GM12878 (cell line): ENCODE measurements at regions of chr19 and their contacts with region 1.

Region 1: DNA sequence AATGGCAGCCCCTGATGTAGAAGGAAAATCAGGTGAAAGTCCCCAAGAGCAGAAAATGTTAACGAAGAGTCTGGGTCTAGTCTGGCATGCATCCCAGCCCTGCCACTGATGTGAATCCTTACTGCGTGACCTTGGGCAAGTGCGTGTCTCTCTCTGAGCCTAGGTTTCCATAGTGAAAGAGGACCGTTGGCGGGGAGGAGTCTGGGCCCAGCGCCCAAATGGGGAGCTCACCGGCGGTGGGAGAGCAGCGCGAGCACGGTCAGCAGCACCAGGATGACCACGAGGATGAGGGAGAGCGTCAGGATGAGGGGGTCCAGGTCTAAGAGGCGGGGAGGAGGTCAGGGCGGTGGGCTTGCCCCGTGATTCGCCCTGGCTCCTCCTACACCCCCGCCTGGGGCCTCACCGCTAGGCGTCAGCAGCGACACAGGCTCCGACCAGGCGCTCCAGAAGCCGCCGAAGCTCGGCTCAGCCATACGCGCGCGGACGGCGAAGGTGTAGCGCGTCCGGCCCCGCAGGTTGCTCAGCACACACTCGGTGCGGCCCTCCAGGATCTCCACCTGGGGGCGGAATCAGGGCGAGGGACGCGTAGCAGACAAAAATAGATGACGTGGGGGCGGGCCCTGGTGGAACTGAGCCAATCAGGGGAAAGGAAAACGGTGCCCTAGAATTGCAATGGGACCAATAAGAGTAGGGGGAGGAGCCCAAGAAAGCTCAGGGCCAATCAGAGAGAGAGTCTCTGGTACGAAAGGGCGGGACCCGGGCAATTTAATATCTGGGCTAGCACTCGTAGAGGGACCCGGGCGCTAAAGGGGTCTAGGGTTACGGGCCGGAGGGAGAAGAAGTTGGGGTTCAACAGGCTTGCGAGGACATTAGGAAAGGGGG is 3.2 kb downstream of the EPOR start:
- DNase-seq: peak; percentile 95
- ATAC-seq: peak; percentile 89
- H3K4me3 ChIP-seq: peak overlapping the region; percentile 79
- H3K27ac ChIP-seq: peak overlapping the region; percentile 88
- H3K4me1 ChIP-seq: peaks cover 27% of the 10 kb centered on the region
- H3K27me3 ChIP-seq: peaks cover 0 to 5% of the 10 kb centered on the region in 2 experiments; a peak in 2 of 4 replicates
- CTCF ChIP-seq: peak; percentile 75 to 79 (median 76)
- EP300 ChIP-seq: no peak
- POLR2A ChIP-seq: peak; percentile 89
- RAD21 ChIP-seq: peak; percentile 58

Region 2: GRCh38 chr19:11324079-11324661 is 56.7 kb before region 1 on chr19:
- CTCF ChIA-PET with region 1: interaction called, 10 read pairs
- POLR2A ChIA-PET with region 1: interaction called, 6 read pairs
- RAD21 ChIA-PET with region 1: interaction called, 7 read pairs
- SMC1A ChIA-PET with region 1: interaction called, 13 read pairs
- in situ Hi-C with region 1: no loop called
- intact Hi-C with region 1: no loop called
- DNase-seq: peak; percentile 71
- ATAC-seq: peak; percentile 92
- H3K4me3 ChIP-seq: peak overlapping the region; percentile 27
- H3K27ac ChIP-seq: peak overlapping the region; percentile 88
- H3K4me1 ChIP-seq: peaks cover 41% of the 10 kb centered on the region
- H3K27me3 ChIP-seq: no peaks in the 10 kb centered on the region
- CTCF ChIP-seq: no peak
- EP300 ChIP-seq: peak in 1 of 2 experiments; percentile 19; a peak in 1 of 4 replicates
- POLR2A ChIP-seq: peak; percentile 56; the same call in 1 of the 2 replicates
- RAD21 ChIP-seq: no peak; the same call in 1 of the 2 replicates

Region 3: DNA sequence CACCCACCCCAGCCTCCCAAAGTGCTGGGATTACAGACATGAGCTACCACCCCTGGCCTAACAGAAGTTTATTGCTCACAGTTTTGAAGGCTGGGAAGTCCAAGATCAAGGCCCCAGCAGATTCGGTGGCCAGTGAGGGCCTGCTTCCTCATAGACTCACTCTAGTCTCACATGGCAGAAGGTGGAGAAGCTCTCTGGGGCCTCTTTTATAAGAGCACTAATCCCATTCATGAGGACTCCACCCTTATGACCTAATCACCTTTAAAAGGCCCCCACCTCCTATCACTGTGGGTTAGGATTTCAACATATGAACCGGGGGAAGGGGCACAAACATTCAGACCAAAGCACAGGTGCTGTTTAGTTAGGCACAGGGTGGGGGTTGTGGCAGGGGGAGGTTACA is 13.4 kb before region 1 on chr19:
- CTCF ChIA-PET with region 1: interaction called, 29 read pairs
- POLR2A ChIA-PET with region 1: interaction called, 5 read pairs
- RAD21 ChIA-PET with region 1: interaction called, 3 read pairs
- SMC1A ChIA-PET with region 1: interaction called, 3 read pairs
- in situ Hi-C with region 1: no loop called
- intact Hi-C with region 1: no loop called
- DNase-seq: no peak
- ATAC-seq: no peak
- H3K4me3 ChIP-seq: no peak overlapping the region
- H3K27ac ChIP-seq: no peak overlapping the region
- H3K4me1 ChIP-seq: no peaks in the 10 kb centered on the region
- H3K27me3 ChIP-seq: no peaks in the 10 kb centered on the region
- CTCF ChIP-seq: no peak
- EP300 ChIP-seq: no peak
- POLR2A ChIP-seq: no peak
- RAD21 ChIP-seq: no peak

Region 4: GRCh38 chr19:11422163-11423021 is 41.5 kb after region 1 on chr19:
- CTCF ChIA-PET with region 1: interaction called, 13 read pairs
- POLR2A ChIA-PET with region 1: interaction called, 3 read pairs
- RAD21 ChIA-PET with region 1: interaction called, 6 read pairs
- SMC1A ChIA-PET with region 1: interaction called, 14 read pairs
- in situ Hi-C with region 1: no loop called
- intact Hi-C with region 1: no loop called
- DNase-seq: peak; percentile 64
- ATAC-seq: peak; percentile 95
- H3K4me3 ChIP-seq: peak overlapping the region; percentile 39; the same call in 1 of the 2 replicates
- H3K27ac ChIP-seq: no peak overlapping the region
- H3K4me1 ChIP-seq: peaks cover 22% of the 10 kb centered on the region
- H3K27me3 ChIP-seq: peaks cover 7 to 16% of the 10 kb centered on the region in 2 experiments
- CTCF ChIP-seq: no peak
- EP300 ChIP-seq: 0 out of 4 replicates have a peak, but pooled peaks of 1 of the 2 experiments have one; percentile 7
- POLR2A ChIP-seq: peak; percentile 33; the same call in 1 of the 2 replicates
- RAD21 ChIP-seq: no peak

Region 5: DNA sequence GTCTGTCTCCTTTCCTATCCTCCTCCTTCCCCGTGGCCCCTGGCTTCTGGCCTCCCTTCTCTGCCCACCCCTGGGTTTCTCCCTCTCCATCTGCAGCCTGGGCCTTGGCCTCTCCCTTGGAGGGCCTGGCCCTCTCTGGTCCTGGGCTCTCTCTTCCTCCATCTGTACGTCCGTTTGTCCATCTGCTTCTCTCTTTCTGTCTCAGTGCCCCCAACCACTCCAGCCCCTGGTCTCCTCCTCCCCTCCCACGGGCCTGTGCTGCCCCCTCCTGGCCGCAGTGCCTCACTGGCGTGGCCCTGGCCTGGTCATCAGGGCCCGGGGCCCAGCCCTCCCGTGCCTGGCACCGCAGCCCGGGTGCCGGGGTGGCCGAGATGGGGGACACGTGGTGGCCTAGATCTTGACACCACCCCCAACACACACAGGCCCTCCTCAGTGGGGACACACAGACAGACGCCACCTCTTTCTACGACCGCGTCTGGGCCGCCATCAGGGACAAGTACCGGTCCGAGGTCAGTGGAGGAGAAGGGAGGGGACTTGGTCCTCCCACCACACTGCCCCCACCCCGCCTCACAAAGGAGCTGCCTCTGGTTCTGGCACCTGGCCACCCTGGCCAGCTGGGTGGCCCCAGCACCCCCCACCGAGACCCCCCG is 65.9 kb after region 1 on chr19:
- CTCF ChIA-PET with region 1: interaction called, 21 read pairs
- POLR2A ChIA-PET with region 1: interaction called, 6 read pairs
- RAD21 ChIA-PET with region 1: interaction called, 19 read pairs
- SMC1A ChIA-PET with region 1: interaction called, 7 read pairs
- in situ Hi-C with region 1: no loop called
- intact Hi-C with region 1: loop called (anchors 2 kb)
- DNase-seq: no peak
- ATAC-seq: peak; percentile 85
- H3K4me3 ChIP-seq: no peak overlapping the region
- H3K27ac ChIP-seq: no peak overlapping the region
- H3K4me1 ChIP-seq: 0 out of 2 replicates have a peak, but pooled peaks cover 4% of the 10 kb centered on the region
- H3K27me3 ChIP-seq: no peaks in the 10 kb centered on the region
- CTCF ChIP-seq: peak; percentile 53 to 82 (median 68)
- EP300 ChIP-seq: no peak
- POLR2A ChIP-seq: no peak
- RAD21 ChIP-seq: peak; percentile 70

Region 6: GRCh38 chr19:11482384-11483050 is 101.6 kb after region 1 on chr19:
- CTCF ChIA-PET with region 1: interaction called, 76 read pairs
- POLR2A ChIA-PET with region 1: interaction called, 12 read pairs
- RAD21 ChIA-PET with region 1: interaction called, 43 read pairs
- SMC1A ChIA-PET with region 1: interaction called, 30 read pairs
- in situ Hi-C with region 1: no loop called
- intact Hi-C with region 1: loop called (anchors 2 kb)
- DNase-seq: peak; percentile 50
- ATAC-seq: peak; percentile 95
- H3K4me3 ChIP-seq: peak overlapping the region; percentile 40; the same call in 1 of the 2 replicates
- H3K27ac ChIP-seq: no peak overlapping the region
- H3K4me1 ChIP-seq: peaks cover 19% of the 10 kb centered on the region
- H3K27me3 ChIP-seq: peaks cover 8 to 10% of the 10 kb centered on the region in 2 experiments
- CTCF ChIP-seq: peak; percentile 83 to 99 (median 93); a peak in 5 of 6 replicates
- EP300 ChIP-seq: peak; percentile 7 to 35; a peak in 1 of 4 replicates
- POLR2A ChIP-seq: no peak; the same call in 1 of the 2 replicates
- RAD21 ChIP-seq: peak; percentile 69

Region 7: GRCh38 chr19:11581740-11582139 is 200.8 kb after region 1 on chr19:
- CTCF ChIA-PET with region 1: interaction called, 4 read pairs
- POLR2A ChIA-PET with region 1: no interaction called
- RAD21 ChIA-PET with region 1: interaction called, 7 read pairs
- SMC1A ChIA-PET with region 1: no interaction called
- in situ Hi-C with region 1: no loop called
- intact Hi-C with region 1: loop called (anchors 5 kb)
- DNase-seq: peak; percentile 96
- ATAC-seq: peak; percentile 84
- H3K4me3 ChIP-seq: 0 out of 2 replicates have a peak overlapping the region, but pooled peaks have one; percentile 31
- H3K27ac ChIP-seq: peak overlapping the region; percentile 76
- H3K4me1 ChIP-seq: peaks cover 48% of the 10 kb centered on the region
- H3K27me3 ChIP-seq: no peaks in the 10 kb centered on the region
- CTCF ChIP-seq: no peak
- EP300 ChIP-seq: peak in 1 of 2 experiments; percentile 55; a peak in 1 of 4 replicates
- POLR2A ChIP-seq: no peak
- RAD21 ChIP-seq: no peak